Thyroid gland (tissue), 4 donors: ENCODE measurements at regions of chr21 and their contacts with region 1.

Region 1: DNA sequence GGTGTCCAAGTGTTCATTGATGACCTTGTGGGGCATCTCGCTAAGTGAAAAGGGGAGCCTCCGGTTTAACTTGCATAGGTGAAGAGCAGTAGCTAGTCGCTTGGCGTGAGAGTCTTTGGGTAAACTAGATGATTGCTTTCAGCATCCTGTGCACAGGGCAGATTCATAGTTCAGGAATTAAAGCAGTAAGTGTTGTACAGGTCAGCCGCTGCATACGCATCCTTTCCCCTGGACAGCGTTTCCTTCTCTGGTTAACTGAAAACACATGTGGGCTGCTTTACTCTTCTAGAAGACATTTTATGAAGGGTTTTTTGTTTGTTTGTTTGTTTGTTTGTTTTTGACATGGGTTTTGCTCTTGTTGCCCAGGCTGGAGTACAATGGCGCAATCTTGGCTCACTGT is 12.1 kb downstream of the NDUFV3 start:
- DNase-seq: no peak
- H3K4me3 ChIP-seq: no peak overlapping the region
- H3K27ac ChIP-seq: no peak overlapping the region
- H3K4me1 ChIP-seq: no peaks in the 10 kb centered on the region
- H3K27me3 ChIP-seq: no peaks in the 10 kb centered on the region
- CTCF ChIP-seq: no peak
- POLR2A ChIP-seq: no peak

Region 2: GRCh38 chr21:42845296-42845965 is 59.8 kb before region 1 on chr21:
- intact Hi-C with region 1: loop called (anchors 10 kb)
- DNase-seq: peak; percentile 80 to 83
- H3K4me3 ChIP-seq: no peak overlapping the region
- H3K27ac ChIP-seq: peak overlapping the region; percentile 53 to 70 (median 65)
- H3K4me1 ChIP-seq: peaks cover 14 to 15% of the 10 kb centered on the region in 2 donors
- H3K27me3 ChIP-seq: no peaks in the 10 kb centered on the region
- CTCF ChIP-seq: no peak
- POLR2A ChIP-seq: no peak

Region 3: GRCh38 chr21:42974832-42975820 is 69.9 kb after region 1 on chr21:
- intact Hi-C with region 1: no loop called
- DNase-seq: peak; percentile 41 to 64
- H3K4me3 ChIP-seq: peak overlapping the region; percentile 53 to 79 (median 56)
- H3K27ac ChIP-seq: peak overlapping the region; percentile 93 to 96 (median 96)
- H3K4me1 ChIP-seq: peaks cover 14 to 17% of the 10 kb centered on the region in 2 donors
- H3K27me3 ChIP-seq: no peaks in the 10 kb centered on the region
- CTCF ChIP-seq: no peak
- POLR2A ChIP-seq: peak in 1 of 2 donors; percentile 18

Region 4: DNA sequence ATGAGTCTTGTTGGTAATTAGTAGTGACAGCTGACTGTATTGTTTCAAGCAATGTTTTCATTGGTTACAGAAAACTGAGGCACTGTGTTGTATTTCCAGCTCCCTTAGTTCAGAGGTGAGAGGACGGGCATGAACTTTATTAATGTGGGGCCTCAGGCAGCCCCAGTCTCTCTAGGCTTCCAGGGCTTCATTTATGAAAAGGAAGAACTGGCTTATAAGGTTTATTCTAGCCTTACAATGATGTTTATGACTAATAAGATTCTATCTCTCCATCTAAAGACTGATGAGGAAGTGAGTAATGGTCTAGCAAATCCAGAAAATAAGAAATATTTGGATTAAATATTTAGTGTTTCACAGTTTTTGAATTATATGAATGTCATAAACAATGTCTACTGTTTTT is 128.9 kb after region 1 on chr21:
- intact Hi-C with region 1: no loop called
- DNase-seq: no peak
- H3K4me3 ChIP-seq: no peak overlapping the region
- H3K27ac ChIP-seq: peak overlapping the region in 1 of 3 donors; percentile 1
- H3K4me1 ChIP-seq: peaks cover 16 to 35% of the 10 kb centered on the region in 2 donors
- H3K27me3 ChIP-seq: no peaks in the 10 kb centered on the region
- CTCF ChIP-seq: no peak
- POLR2A ChIP-seq: no peak